ENCODE measurements at regions of chr7 and their contacts with region 1.

Region 1: DNA sequence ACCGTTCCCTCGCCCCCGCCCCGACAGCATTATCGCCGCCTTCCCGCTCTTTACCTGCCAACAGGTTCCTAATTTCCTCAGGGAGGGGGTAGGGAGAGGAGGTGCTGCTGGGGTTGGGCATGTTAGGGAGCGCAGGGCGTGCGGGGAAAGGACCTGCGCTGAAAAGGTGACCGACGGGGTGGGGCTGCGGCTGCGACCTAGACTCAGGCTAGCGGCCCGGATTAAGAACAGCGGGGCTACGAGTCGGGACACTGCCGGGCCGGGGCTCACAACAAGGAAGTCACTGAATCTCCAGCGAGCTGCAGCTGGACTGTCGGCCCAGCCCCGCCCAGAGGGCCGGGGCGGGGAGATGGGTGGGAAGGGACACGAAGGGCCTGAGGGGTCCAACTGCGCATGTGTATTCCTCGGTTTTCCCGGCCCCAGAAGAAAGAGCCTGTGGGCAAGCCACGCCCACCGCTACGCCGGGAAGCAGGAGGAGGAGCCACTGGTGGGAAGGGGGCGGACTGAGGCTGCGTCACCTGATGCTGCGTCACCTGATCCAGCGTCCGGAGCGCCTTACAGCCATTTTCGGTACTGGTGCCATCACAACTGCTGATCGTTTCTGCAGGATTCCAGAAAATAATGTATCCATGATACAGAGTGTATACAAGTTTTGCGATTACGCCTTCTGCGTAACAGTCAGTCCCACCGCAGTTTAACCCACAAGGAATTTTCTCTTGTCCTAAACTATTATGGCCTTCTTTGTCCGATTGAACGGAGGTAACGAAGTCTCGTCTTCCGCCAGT is at the start of gene SKAP2:
- DNase-seq: peak; percentile 99
- H3K4me3 ChIP-seq: peak within 1 kb of the TSS; percentile 54 to 73 (median 72)
- H3K27ac ChIP-seq: peak within 1 kb of the TSS; percentile 93
- H3K4me1 ChIP-seq: peaks cover 31% of the 10 kb centered on the region
- H3K27me3 ChIP-seq: no peaks in the 10 kb centered on the region
- CTCF ChIP-seq: no peak
- total RNA-seq, gene SKAP2: 19.8 to 38.9 TPM

Region 2: DNA sequence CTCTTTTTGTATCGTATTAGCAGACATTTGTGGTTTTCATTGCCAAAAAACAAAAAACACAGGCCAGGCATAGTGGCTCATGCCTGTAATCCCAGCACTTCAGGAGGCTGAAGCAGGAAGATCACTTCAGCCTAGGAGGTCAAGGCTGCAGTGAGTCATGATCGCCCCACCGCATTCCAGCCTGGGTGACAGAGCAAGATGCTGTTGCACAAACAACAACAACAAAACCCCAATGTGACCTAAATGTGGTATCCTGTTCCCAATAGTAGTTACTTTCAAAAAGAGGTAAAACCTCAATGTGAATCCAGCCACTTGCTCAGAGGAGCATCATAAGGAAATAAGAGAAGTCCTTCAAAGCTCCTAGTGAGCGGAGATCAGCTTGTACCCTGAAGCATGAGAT is 45.7 kb after region 1 on chr7:
- CTCF ChIA-PET with region 1: no interaction called
- dilution Hi-C with region 1: no loop called
- in situ Hi-C with region 1: loop called in 1 of 2 experiments (anchors 10 kb)
- intact Hi-C with region 1: no loop called
- DNase-seq: peak; percentile 75
- H3K4me3 ChIP-seq: no peak overlapping the region
- H3K27ac ChIP-seq: no peak overlapping the region
- H3K4me1 ChIP-seq: peaks cover 15% of the 10 kb centered on the region
- H3K27me3 ChIP-seq: no peaks in the 10 kb centered on the region
- CTCF ChIP-seq: no peak

Region 3: DNA sequence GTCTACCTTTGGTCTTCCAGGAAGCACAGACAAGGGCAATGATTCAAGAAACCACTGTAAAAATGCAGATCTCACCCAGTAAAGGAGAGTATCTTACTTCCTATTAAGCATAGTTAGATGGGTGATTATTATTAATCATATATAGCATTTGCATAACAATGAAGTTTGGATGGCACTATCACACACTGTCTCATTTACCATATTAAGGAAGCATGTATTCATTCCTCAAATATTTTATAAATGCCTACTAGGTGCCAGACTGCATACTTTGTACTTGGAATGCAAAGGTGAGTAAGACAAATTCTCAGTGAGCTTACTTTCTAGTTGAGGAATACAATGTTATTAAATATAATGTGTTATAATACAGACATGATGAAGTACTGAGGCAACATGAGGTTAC is 53.7 kb after region 1 on chr7:
- CTCF ChIA-PET with region 1: no interaction called
- dilution Hi-C with region 1: no loop called
- in situ Hi-C with region 1: loop called in 1 of 2 experiments (anchors 10 kb)
- intact Hi-C with region 1: loop called (anchors 2 kb)
- DNase-seq: peak; percentile 58
- H3K4me3 ChIP-seq: no peak overlapping the region
- H3K27ac ChIP-seq: peak overlapping the region; percentile 44
- H3K4me1 ChIP-seq: peaks cover 33% of the 10 kb centered on the region
- H3K27me3 ChIP-seq: no peaks in the 10 kb centered on the region
- CTCF ChIP-seq: no peak

Region 4: GRCh38 chr7:26930201-26930600 is 65.7 kb after region 1 on chr7:
- CTCF ChIA-PET with region 1: no interaction called
- dilution Hi-C with region 1: no loop called
- in situ Hi-C with region 1: no loop called
- intact Hi-C with region 1: no loop called
- DNase-seq: peak; percentile 52
- H3K4me3 ChIP-seq: no peak overlapping the region
- H3K27ac ChIP-seq: no peak overlapping the region
- H3K4me1 ChIP-seq: peaks cover 3% of the 10 kb centered on the region
- H3K27me3 ChIP-seq: no peaks in the 10 kb centered on the region
- CTCF ChIP-seq: no peak

Region 5: GRCh38 chr7:26948617-26949118 is 84.2 kb after region 1 on chr7:
- CTCF ChIA-PET with region 1: no interaction called
- dilution Hi-C with region 1: loop called (anchors 5 kb)
- in situ Hi-C with region 1: no loop called
- intact Hi-C with region 1: loop called (anchors 2 kb)
- DNase-seq: peak; percentile 91
- H3K4me3 ChIP-seq: peak overlapping the region in 1 of 3 experiments; percentile 8
- H3K27ac ChIP-seq: peak overlapping the region; percentile 75
- H3K4me1 ChIP-seq: peaks cover 16% of the 10 kb centered on the region
- H3K27me3 ChIP-seq: no peaks in the 10 kb centered on the region
- CTCF ChIP-seq: no peak

Region 6: GRCh38 chr7:26993816-26994810 is 129.6 kb after region 1 on chr7:
- CTCF ChIA-PET with region 1: no interaction called
- dilution Hi-C with region 1: no loop called
- in situ Hi-C with region 1: no loop called
- intact Hi-C with region 1: loop called (anchors 2 kb)
- DNase-seq: peak; percentile 47
- H3K4me3 ChIP-seq: no peak overlapping the region
- H3K27ac ChIP-seq: peak overlapping the region; percentile 61
- H3K4me1 ChIP-seq: peaks cover 34% of the 10 kb centered on the region
- H3K27me3 ChIP-seq: no peaks in the 10 kb centered on the region
- CTCF ChIP-seq: no peak

Region 7: GRCh38 chr7:27046854-27047549 is 182.5 kb after region 1 on chr7:
- CTCF ChIA-PET with region 1: no interaction called
- dilution Hi-C with region 1: no loop called
- in situ Hi-C with region 1: no loop called
- intact Hi-C with region 1: loop called (anchors 2 kb)
- DNase-seq: peak; percentile 52
- H3K4me3 ChIP-seq: peak overlapping the region in 1 of 3 experiments; percentile 20
- H3K27ac ChIP-seq: no peak overlapping the region
- H3K4me1 ChIP-seq: peaks cover 4% of the 10 kb centered on the region
- H3K27me3 ChIP-seq: no peaks in the 10 kb centered on the region
- CTCF ChIP-seq: no peak

Measured in mammary epithelial cell (primary cell).